ENCODE measurements at regions of chr2 and their contacts with region 1.

Region 1: DNA sequence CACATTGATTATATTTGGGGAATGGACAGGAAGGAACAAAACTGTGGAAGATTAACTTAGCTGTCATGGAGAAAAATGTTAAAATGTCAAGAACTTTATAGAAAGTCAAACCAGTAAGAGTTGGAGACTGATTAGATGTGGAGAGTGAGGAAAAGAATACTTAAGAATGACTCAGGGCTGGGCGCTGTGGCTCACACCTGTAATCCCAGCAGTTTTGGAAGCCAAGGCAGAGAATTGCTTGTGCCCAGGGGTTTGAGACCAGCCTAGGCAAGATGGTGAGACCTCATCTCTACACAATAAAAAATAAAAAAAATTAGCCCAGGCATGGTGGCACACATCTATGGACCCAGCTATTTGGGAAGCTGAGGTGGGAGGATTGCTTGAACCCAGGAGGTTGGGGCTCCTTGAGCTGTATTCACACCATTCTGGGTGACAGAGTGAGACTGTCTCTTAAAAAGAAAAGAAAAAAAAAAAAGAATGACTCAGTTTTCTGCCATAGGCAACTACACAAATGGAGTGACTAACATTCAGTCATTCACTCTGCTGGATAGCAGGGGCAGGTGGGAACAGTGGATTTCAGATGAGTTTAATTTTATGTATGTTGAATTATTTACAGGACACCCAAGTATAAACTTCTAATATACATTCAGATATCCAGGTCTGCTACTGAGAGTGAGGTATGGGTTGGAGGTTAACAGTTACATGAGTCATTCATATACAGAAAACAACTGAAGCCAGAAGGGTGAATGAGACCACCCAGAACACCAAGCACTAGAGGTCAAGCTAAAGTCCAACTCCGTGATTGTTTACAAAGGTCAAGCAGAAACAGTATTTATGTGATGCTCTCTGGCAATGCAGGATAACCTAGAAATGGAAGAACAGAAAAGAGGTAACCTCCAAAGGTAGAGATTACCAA is 33.9 kb downstream of the ORC2 start:
- DNase-seq: no peak
- ATAC-seq: no peak
- H3K4me3 ChIP-seq: no peak overlapping the region
- H3K4me3 Mint-ChIP-seq: no peak overlapping the region
- H3K27ac ChIP-seq: no peak overlapping the region
- H3K27ac Mint-ChIP-seq: peak overlapping the region; percentile 62
- H3K4me1 ChIP-seq: no peaks in the 10 kb centered on the region
- H3K4me1 Mint-ChIP-seq: no peaks in the 10 kb centered on the region
- H3K27me3 ChIP-seq: no peaks in the 10 kb centered on the region
- H3K27me3 Mint-ChIP-seq: no peaks in the 10 kb centered on the region
- CTCF ChIP-seq: no peak

Region 2: DNA sequence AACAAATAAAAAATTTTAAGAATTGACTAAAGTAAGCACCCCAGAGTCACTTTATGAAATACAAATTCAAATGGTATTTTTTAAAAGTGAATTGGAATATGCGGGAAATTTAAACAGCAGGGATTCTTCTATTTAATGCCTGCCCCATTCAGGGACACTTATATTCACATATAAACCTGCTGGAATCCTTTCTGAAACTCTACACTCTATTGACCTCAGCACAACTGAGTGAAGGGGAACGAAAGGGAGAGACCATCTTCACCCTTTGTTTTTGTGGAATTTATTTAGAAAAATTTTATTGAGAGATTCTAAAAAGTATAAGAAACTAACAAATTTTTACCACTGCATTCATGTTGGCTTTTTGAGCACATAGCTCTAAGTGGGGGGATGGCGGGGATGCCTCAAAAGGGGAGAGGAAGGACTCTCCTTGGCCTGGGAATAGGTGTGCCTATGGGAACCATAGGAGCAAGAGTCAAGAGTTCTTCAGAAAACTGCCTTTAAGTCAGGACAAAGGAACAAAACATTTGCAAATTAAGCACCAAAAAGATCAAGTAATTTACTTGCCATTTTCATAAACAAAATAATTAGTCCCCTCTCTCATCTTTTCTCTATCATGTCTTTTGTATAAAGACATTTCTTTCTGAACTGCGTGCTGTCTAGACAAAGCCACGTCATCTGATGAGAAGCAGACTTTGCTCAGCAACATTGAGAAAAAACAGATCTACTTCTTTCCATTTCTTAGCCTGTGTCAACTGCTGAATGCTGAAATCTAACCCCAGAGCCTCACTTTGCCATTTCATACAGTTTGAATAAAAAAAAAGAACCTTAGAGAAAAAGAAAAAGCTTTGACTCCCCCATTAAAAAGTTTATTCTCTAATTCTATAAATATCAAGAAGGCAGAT is 449.2 kb after region 1 on chr2:
- CTCF ChIA-PET with region 1: no interaction called
- POLR2A ChIA-PET with region 1: no interaction called
- intact Hi-C with region 1: loop called in 1 of 2 experiments (anchors 10 kb)
- DNase-seq: no peak
- ATAC-seq: no peak
- H3K4me3 ChIP-seq: no peak overlapping the region
- H3K4me3 Mint-ChIP-seq: no peak overlapping the region
- H3K27ac ChIP-seq: no peak overlapping the region
- H3K27ac Mint-ChIP-seq: no peak overlapping the region
- H3K4me1 ChIP-seq: no peaks in the 10 kb centered on the region
- H3K4me1 Mint-ChIP-seq: no peaks in the 10 kb centered on the region
- H3K27me3 ChIP-seq: no peaks in the 10 kb centered on the region
- H3K27me3 Mint-ChIP-seq: no peaks in the 10 kb centered on the region
- CTCF ChIP-seq: no peak

Measured in CD8-positive, alpha-beta T cell (primary cell).